Panc1 (cell line): ENCODE measurements at regions of chr7 and their contacts with region 1.

Region 1: GRCh38 chr7:40845943-40846342 is 711.1 kb downstream of the SUGCT start:
- DNase-seq: no peak
- ATAC-seq: no peak
- H3K4me3 ChIP-seq: no peak overlapping the region
- H3K27ac ChIP-seq: no peak overlapping the region
- H3K4me1 ChIP-seq: no peaks in the 10 kb centered on the region
- H3K27me3 ChIP-seq: no peaks in the 10 kb centered on the region
- CTCF ChIP-seq: no peak

Region 2: GRCh38 chr7:40833888-40834234 is 12.1 kb before region 1 on chr7:
- CTCF ChIA-PET with region 1: no interaction called
- POLR2A ChIA-PET with region 1: no interaction called
- in situ Hi-C with region 1: no loop called
- intact Hi-C with region 1: loop called (anchors 1 kb)
- DNase-seq: no peak
- ATAC-seq: no peak
- H3K4me3 ChIP-seq: no peak overlapping the region
- H3K27ac ChIP-seq: no peak overlapping the region
- H3K4me1 ChIP-seq: no peaks in the 10 kb centered on the region
- H3K27me3 ChIP-seq: no peaks in the 10 kb centered on the region
- CTCF ChIP-seq: peak; percentile 30; the same call in 1 of the 2 replicates